CD8-positive, alpha-beta T cell (primary cell): ENCODE measurements at regions of chr10 and their contacts with region 1.

Region 1: DNA sequence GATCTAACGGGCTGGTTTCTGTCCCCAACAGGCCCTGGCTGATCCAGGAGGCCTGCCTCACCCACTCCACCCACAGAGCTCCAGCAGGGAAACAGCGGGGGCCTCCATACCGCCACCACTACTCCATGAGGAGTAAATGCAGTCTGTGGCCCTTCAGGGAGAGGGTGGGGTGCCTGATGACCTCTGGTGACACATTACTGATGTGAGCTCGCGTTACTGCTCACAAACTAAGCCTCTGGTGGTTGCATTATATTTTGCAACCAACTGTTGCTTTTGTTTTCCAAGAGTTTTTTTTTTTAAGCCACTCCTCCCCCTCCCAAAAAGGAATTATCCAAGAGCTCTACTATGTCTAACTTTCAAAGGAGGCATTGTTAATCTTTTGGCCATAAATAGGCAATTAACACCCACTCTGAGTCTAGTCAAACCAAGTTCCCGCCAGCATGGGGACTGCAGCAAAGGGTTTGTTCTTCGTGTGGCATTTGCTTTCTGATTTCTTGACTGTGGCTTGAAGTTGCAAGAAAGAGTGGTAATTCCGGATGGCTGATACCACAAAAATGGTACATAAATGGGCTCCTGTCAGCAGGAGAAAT is 72.6 kb downstream of the FAM53B start:
- DNase-seq: peak in 2 of 9 experiments; percentile 44 to 70
- ATAC-seq: peak; percentile 44
- H3K4me3 ChIP-seq: peak overlapping the region; percentile 1 to 2
- H3K4me3 Mint-ChIP-seq: peak overlapping the region; percentile 60
- H3K27ac ChIP-seq: peak overlapping the region; percentile 9 to 69
- H3K27ac Mint-ChIP-seq: peak overlapping the region; percentile 84
- H3K4me1 ChIP-seq: peaks cover 83% of the 10 kb centered on the region
- H3K4me1 Mint-ChIP-seq: peaks cover 77% of the 10 kb centered on the region
- H3K27me3 ChIP-seq: no peaks in the 10 kb centered on the region
- H3K27me3 Mint-ChIP-seq: no peaks in the 10 kb centered on the region
- CTCF ChIP-seq: no peak

Region 2: DNA sequence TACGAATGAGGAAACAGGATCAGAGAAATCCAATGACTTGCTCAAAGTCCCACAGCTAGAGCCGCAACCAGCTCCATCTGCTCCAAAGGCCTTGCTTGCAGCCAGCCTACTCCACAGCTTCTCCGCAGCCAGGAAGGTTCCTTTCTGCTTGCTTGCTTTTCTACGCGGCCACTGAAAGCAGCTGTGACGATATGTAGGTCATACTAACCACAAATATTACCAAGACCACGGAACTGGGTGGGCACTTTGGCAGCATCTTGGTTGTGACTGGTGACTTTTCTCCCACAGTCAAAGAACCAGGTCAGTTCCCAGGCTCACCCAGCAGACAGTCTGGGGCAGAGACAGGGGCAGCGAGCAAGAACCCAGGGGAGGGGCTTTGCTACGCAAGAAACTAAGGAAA is 13.8 kb before region 1 on chr10:
- CTCF ChIA-PET with region 1: interaction called, 6 read pairs
- POLR2A ChIA-PET with region 1: interaction called, 8 read pairs
- intact Hi-C with region 1: loop called in 1 of 2 experiments (anchors 2 kb)
- DNase-seq: peak in 6 of 9 experiments; percentile 28 to 87 (median 52)
- ATAC-seq: peak; percentile 56
- H3K4me3 ChIP-seq: no peak overlapping the region
- H3K4me3 Mint-ChIP-seq: peak overlapping the region; percentile 54
- H3K27ac ChIP-seq: peak overlapping the region; percentile 46 to 91
- H3K27ac Mint-ChIP-seq: peak overlapping the region; percentile 85
- H3K4me1 ChIP-seq: peaks cover 70% of the 10 kb centered on the region
- H3K4me1 Mint-ChIP-seq: peaks cover 78% of the 10 kb centered on the region
- H3K27me3 ChIP-seq: no peaks in the 10 kb centered on the region
- H3K27me3 Mint-ChIP-seq: no peaks in the 10 kb centered on the region
- CTCF ChIP-seq: no peak